PC-3 (cell line): ENCODE measurements at regions of chr17 and their contacts with region 1.

Region 1: DNA sequence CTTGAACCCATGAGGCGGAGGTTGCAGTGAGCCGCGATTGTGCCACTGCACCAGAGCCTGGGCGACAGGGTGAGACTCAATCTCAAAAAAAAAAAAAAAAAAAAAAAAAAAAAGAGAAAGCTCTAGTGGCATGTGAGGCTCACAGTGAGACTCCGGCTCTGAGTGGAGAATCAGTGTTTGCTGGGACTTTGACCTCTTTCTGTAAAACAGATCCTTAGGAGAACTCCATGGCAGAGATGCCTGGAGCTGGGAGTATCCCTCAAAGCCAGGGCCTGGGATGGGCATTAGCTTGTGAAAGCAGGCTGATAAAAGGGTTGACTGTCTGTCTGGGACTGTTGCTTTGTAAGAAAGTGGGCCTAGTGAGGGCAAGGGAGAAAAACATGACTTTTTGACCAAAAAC is 46.4 kb downstream of the ZNF207 start:
- DNase-seq: no peak
- ATAC-seq: no peak
- H3K4me3 ChIP-seq: no peak overlapping the region
- H3K27ac ChIP-seq: no peak overlapping the region
- H3K4me1 ChIP-seq: no peaks in the 10 kb centered on the region
- H3K27me3 ChIP-seq: no peaks in the 10 kb centered on the region
- CTCF ChIP-seq: no peak

Region 2: DNA sequence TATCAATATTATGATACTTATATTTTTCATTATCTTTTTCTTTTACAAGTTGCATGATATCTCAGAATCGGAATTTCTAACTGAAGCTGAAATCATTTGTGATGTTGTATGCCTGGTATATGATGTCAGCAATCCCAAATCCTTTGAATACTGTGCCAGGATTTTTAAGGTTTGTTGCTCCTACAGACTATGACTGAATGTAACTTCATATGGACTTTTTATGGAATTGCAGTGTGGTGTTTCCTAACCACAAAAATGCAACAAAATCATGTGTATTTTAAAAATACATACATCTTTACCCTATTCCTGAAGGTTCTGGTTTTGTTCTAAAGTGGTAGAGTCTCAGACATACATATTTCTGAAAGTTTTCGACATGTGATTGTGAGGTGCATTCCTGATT is 189.5 kb before region 1 on chr17:
- CTCF ChIA-PET with region 1: no interaction called
- POLR2A ChIA-PET with region 1: interaction called, 13 read pairs
- intact Hi-C with region 1: no loop called
- DNase-seq: no peak
- ATAC-seq: no peak
- H3K4me3 ChIP-seq: no peak overlapping the region
- H3K27ac ChIP-seq: no peak overlapping the region
- H3K4me1 ChIP-seq: peaks cover 5% of the 10 kb centered on the region; the same call in 1 of the 2 replicates
- H3K27me3 ChIP-seq: no peaks in the 10 kb centered on the region
- CTCF ChIP-seq: no peak

Region 3: DNA sequence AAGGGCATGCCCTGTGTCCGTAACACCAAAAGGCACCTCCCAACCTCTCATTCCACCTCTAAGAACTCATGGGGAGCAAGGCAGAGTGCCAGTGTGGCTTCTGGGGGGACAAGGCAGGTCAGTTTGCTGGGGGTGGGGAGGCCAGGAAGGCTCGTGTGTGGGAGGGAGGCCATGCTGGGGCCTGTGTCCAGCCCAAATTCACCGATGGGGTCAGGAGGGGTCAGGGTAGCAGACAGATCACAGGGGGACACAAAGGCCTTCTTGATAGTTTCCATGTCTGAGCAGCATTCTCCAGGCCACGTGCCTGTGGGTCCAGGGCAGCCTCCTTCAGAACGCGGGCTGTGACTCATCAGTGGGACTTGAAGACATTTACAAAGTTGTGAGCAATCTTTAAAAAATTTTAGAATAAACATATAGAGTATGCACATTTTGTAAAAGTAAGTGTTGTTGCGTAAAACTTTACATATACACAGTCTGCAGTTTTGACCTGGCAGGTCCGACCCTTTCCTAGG is 616.2 kb after region 1 on chr17:
- CTCF ChIA-PET with region 1: no interaction called
- POLR2A ChIA-PET with region 1: no interaction called
- intact Hi-C with region 1: no loop called
- DNase-seq: peak; percentile 85
- ATAC-seq: peak; percentile 70
- H3K4me3 ChIP-seq: no peak overlapping the region
- H3K27ac ChIP-seq: no peak overlapping the region
- H3K4me1 ChIP-seq: peaks cover 10% of the 10 kb centered on the region
- H3K27me3 ChIP-seq: no peaks in the 10 kb centered on the region
- CTCF ChIP-seq: no peak